Gastrocnemius medialis (tissue), 4 donors: ENCODE measurements at regions of chr5 and their contacts with region 1.

Region 1: GRCh38 chr5:138035605-138036537 is 3.0 kb upstream of the FAM13B start:
- DNase-seq: peak; percentile 23 to 64
- ATAC-seq: peak; percentile 63 to 78
- H3K4me3 ChIP-seq: no peak overlapping the region
- H3K27ac ChIP-seq: peak overlapping the region in 2 of 4 donors; percentile 36 to 58
- H3K4me1 ChIP-seq: peaks cover 20 to 25% of the 10 kb centered on the region in 2 donors
- H3K27me3 ChIP-seq: no peaks in the 10 kb centered on the region
- CTCF ChIP-seq: peak; percentile 71 to 86 (median 79)
- POLR2A ChIP-seq: no peak

Region 2: DNA sequence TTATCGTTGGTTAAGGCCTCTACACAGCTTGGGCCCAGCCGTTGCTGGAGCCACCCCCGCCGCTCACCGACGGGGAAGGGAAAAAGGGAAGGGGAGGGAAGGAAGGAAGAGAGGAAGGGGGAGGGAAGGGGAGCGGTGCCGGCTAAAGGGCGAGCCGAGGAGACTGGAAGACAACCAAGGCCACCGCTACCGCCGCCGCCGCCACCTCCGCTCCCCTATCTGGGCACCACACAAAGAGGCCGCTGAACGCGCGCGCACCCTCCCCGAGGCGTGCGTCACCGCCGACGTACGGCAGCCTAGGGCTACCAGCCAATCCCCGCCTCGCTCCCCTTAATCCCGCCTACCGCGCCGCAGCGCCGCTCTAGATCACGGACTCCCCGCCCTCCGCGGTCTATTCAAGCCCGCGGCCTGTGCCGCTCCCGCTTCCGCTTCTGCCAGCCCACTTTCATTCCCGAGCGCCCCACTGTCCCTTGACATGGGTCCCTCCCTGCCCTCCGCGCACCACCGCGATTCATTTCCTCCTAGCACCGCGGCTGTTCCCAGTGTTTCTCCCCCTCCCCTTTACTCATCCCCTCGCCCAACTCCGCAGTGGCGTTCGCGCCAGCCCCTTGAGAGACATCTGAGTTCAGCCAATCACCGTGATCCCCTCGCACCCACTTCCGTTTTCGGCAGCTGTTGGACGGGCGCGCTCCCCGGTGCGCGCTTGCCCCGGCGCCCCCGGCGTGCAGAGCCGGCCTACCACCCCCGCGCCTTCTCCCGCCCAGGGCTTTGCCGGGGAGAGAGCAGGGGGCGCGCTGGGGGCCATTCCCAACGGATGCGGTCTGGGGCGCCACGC is 281.5 kb before region 1 on chr5 and contains the start of gene HNRNPA0:
- in situ Hi-C with region 1: loop called in 2 of 4 experiments (anchors 25 kb)
- intact Hi-C with region 1: loop called (anchors 2 kb)
- DNase-seq: peak; percentile 96 to 97
- ATAC-seq: peak; percentile 92 to 95
- H3K4me3 ChIP-seq: peak within 1 kb of the TSS; percentile 80 to 98 (median 96)
- H3K27ac ChIP-seq: peak within 1 kb of the TSS; percentile 98 to 100 (median 100)
- H3K4me1 ChIP-seq: peaks cover 28 to 31% of the 10 kb centered on the region in 2 donors
- H3K27me3 ChIP-seq: no peaks in the 10 kb centered on the region
- CTCF ChIP-seq: peak in 2 of 5 experiments; percentile 19 to 26
- POLR2A ChIP-seq: peak; percentile 96 to 99
- total RNA-seq, gene HNRNPA0: 4.2 to 6.0 (median 5.2) TPM

Region 3: GRCh38 chr5:138069068-138069600 is 33.3 kb after region 1 on chr5:
- in situ Hi-C with region 1: no loop called
- intact Hi-C with region 1: loop called (anchors 1 kb)
- DNase-seq: no peak
- ATAC-seq: no peak
- H3K4me3 ChIP-seq: no peak overlapping the region
- H3K27ac ChIP-seq: no peak overlapping the region
- H3K4me1 ChIP-seq: no peaks in the 10 kb centered on the region
- H3K27me3 ChIP-seq: no peaks in the 10 kb centered on the region
- CTCF ChIP-seq: peak in 1 of 5 experiments; percentile 8
- POLR2A ChIP-seq: no peak

Region 4: DNA sequence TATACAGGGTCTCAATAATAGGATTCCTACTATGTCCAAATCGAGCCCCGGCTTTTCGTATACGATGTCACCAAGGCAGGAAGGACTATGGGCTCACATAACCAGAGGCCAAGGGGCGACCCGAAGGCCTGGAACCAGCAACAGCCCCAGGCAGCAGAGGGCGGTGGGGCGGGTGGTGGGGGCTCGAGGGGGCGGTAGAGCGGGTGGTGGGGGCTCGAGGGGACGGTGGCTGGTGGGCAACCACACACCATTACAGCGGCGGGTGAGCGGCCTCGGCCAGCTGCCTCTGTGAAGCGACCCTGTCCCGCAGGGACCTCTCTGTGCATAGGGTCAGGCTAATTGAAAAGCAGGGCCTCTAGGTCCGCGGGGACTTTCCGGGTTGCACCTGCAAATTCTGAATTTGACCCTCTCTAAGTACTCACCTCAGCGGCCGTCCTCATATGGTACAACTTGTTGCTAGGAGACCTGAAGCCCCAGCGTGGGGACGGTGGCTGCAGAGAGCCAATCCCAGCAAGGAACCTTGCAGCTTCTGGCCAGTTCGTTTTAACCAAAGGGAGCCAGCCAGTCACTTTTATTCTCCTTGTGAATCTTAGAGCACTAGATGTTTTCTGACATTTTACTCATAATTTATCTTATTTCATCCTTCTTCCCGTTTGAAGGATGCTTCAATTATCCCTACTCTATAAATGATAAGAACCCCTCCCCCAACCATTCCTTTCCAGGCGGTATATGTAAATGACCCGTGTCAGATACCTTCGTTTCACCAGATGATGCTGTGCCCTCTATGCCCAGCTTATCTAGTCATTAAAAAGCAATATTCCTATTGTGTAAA is 103.3 kb after region 1 on chr5 and contains the start of gene NME5:
- in situ Hi-C with region 1: loop called in 1 of 4 experiments (anchors 25 kb)
- intact Hi-C with region 1: no loop called
- DNase-seq: peak; percentile 20 to 31
- ATAC-seq: peak; percentile 66 to 74
- H3K4me3 ChIP-seq: peak within 1 kb of the TSS; percentile 50 to 57 (median 56)
- H3K27ac ChIP-seq: no peak within 1 kb of the TSS
- H3K4me1 ChIP-seq: peaks cover 0 to 7% of the 10 kb centered on the region in 2 donors
- H3K27me3 ChIP-seq: no peaks in the 10 kb centered on the region
- CTCF ChIP-seq: no peak
- POLR2A ChIP-seq: no peak
- total RNA-seq, gene NME5: 0.51 TPM in 2 of 4 donors, not detected in the others

Region 5: GRCh38 chr5:138331449-138332368 is 295.8 kb after region 1 on chr5 and contains the start of gene CDC25C:
- in situ Hi-C with region 1: no loop called
- intact Hi-C with region 1: loop called (anchors 10 kb)
- DNase-seq: peak; percentile 98 to 99
- ATAC-seq: peak; percentile 99 to 100
- H3K4me3 ChIP-seq: peak within 1 kb of the TSS; percentile 57 to 70 (median 60)
- H3K27ac ChIP-seq: peak within 1 kb of the TSS; percentile 38 to 63 (median 58)
- H3K4me1 ChIP-seq: peaks cover 10 to 13% of the 10 kb centered on the region in 2 donors
- H3K27me3 ChIP-seq: no peaks in the 10 kb centered on the region
- CTCF ChIP-seq: no peak
- POLR2A ChIP-seq: no peak
- total RNA-seq, gene CDC25C: not detected